Activated T-helper 2 cell treated with anti-CD3 and anti-CD28 coated beads, Interferon-gamma antibody, Interleukin-2, Interleukin-4, amounts not matched to agents 10 μg/mL and 5 μg/mL and 100 μg/mL, durations not matched to agents 14 hours and 24 hours and 36 hours (primary cell): ENCODE measurements at regions of chr3 and their contacts with region 1.

Region 1: DNA sequence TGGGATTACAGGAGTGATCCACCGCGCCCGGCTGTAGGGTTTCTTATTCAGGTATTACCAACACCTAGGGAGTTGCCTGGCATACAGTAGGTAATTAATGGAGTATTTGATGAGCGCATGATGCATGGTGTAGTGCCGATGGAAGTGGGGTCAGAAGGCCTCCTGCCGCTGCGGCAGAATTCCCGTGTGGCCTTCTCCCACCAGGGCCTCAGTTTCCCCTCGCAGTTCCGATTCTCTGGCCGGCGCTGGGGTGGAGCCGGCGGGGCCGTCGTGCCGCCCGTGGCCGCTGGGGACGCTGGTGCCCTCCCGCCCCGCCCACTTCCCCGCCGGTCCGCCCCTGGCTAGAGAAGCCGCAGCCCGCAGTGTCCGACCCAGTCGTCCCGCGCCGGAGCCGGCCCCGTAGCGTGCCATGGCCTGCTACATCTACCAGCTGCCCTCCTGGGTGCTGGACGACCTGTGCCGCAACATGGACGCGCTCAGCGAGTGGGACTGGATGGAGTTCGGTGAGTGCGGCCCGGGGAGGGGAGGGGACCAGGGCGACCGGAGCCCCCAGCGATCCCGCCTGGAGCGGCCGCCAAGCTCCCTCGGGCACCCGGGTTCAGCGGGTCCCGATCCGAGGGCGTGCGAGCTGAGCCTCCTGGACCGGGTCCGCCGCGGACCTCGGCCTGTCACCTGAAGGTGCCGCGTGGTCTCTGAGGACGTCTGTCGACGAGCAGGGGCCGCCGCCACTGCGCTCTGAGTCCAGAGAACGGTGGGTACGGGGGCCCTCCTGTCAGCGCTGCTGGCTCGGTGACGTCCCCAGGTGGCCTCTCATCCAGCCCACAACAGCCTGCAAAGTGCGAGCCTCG is at the start of gene IRAK2:
- DNase-seq: peak; percentile 39
- H3K4me3 Mint-ChIP-seq: peak within 1 kb of the TSS; percentile 72
- H3K27ac Mint-ChIP-seq: no peak within 1 kb of the TSS
- H3K4me1 Mint-ChIP-seq: peaks cover 21% of the 10 kb centered on the region
- H3K27me3 Mint-ChIP-seq: no peaks in the 10 kb centered on the region
- total RNA-seq, gene IRAK2: 2.4 and 2.6 TPM in 2 replicates

Region 2: GRCh38 chr3:10115326-10116137 is 49.2 kb before region 1 on chr3 and contains the start of gene BRK1:
- intact Hi-C with region 1: no loop called
- DNase-seq: peak; percentile 90
- H3K4me3 Mint-ChIP-seq: peak within 1 kb of the TSS; percentile 97
- H3K27ac Mint-ChIP-seq: peak within 1 kb of the TSS; percentile 96
- H3K4me1 Mint-ChIP-seq: peaks cover 19% of the 10 kb centered on the region
- H3K27me3 Mint-ChIP-seq: no peaks in the 10 kb centered on the region
- total RNA-seq, gene BRK1: 94.4 and 100 TPM in 2 replicates

Region 3: DNA sequence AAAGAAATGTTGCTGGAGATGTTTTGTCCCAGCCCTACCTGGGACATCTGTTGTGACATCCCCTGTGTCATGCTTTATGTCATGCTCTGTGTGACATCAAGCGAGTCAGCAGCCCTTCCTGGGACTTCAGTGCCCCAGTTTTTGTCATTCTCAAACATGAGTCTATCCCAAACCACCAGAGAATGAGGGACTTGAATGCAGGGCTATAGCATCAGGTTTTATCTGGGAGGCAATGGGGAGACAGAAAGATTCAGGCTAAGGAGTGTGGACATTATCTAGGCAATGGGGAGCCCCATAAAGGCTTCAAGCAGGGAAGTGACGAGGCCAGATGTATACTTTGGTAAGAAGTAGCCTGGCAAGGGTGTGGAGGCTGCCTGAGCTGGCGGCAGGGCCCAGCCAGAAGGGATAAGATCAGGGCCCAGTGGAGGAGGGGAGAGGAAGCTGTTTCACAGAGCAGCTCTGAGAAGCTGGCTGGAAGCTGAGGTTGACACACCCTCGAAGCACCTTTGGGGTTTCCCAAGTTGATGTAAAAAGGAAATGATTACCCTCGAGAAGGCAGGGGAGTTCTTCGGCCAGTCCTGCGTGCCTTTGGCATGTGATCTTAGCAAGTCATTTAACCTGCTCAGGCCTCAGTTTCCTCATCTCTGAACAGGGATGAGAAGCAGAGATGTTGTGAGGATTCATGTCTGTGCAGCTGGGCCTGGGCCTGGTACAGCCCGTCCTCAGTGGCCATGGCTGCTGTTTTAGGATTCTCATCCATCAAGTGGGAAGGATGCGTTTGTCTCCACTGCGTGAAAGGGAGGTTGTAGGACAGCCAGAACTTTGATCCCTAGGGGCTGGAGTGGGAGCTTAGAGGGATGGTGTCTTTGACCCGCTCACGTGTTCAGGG is 34.2 kb after region 1 on chr3:
- intact Hi-C with region 1: loop called (anchors 2 kb)
- DNase-seq: peak; percentile 72
- H3K4me3 Mint-ChIP-seq: peak overlapping the region; percentile 15
- H3K27ac Mint-ChIP-seq: peak overlapping the region; percentile 91
- H3K4me1 Mint-ChIP-seq: peaks cover 65% of the 10 kb centered on the region
- H3K27me3 Mint-ChIP-seq: no peaks in the 10 kb centered on the region

Region 4: DNA sequence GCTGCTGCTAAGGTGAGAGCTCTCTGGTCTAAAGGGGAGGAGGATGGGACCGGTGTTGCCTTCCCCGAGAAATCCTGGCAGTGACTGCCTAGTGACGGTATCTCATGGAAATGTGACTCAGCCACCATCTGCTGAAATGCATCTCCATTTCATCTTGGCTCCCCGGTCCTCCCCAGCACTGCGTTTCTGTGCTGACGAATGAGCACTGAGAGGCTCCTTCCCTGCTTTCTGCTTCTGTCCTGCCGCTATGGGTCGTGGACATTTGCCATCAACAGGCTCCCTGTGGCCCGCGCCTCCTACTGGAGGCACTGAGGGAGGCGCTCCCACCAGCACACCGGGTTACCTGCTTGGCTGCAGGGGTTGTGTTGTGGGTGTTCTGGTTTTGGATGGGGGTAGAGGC is 169.7 kb after region 1 on chr3:
- intact Hi-C with region 1: no loop called
- DNase-seq: no peak
- H3K4me3 Mint-ChIP-seq: no peak overlapping the region
- H3K27ac Mint-ChIP-seq: no peak overlapping the region
- H3K4me1 Mint-ChIP-seq: peaks cover 3% of the 10 kb centered on the region
- H3K27me3 Mint-ChIP-seq: peaks cover 6% of the 10 kb centered on the region